ENCODE measurements at regions of chr11 and their contacts with region 1.

Region 1: GRCh38 chr11:10808553-10809372 is at the start of gene EIF4G2:
- DNase-seq: peak; percentile 97 to 100 (median 99)

Region 2: GRCh38 chr11:10750838-10751580 is 57.8 kb before region 1 on chr11 and contains the start of gene CTR9:
- intact Hi-C with region 1: loop called (anchors 10 kb)
- DNase-seq: peak; percentile 87 to 98 (median 95)

Region 3: GRCh38 chr11:10857709-10858438 is 49.1 kb after region 1 on chr11 and contains the start of gene ZBED5:
- intact Hi-C with region 1: loop called (anchors 2 kb)
- DNase-seq: peak; percentile 96 to 100 (median 98)

Region 4: GRCh38 chr11:10933455-10934292 is 124.9 kb after region 1 on chr11:
- intact Hi-C with region 1: loop called (anchors 5 kb)
- DNase-seq: peak; percentile 79 to 97 (median 91)

Region 5: GRCh38 chr11:11010624-11011127 is 201.9 kb after region 1 on chr11:
- intact Hi-C with region 1: loop called (anchors 10 kb)
- DNase-seq: peak in 41 of 42 donors; percentile 10 to 77 (median 46)

Measured in head of caudate nucleus (tissue), 42 donors.